A549 (cell line): ENCODE measurements at regions of chr2 and their contacts with region 1.

Region 1: DNA sequence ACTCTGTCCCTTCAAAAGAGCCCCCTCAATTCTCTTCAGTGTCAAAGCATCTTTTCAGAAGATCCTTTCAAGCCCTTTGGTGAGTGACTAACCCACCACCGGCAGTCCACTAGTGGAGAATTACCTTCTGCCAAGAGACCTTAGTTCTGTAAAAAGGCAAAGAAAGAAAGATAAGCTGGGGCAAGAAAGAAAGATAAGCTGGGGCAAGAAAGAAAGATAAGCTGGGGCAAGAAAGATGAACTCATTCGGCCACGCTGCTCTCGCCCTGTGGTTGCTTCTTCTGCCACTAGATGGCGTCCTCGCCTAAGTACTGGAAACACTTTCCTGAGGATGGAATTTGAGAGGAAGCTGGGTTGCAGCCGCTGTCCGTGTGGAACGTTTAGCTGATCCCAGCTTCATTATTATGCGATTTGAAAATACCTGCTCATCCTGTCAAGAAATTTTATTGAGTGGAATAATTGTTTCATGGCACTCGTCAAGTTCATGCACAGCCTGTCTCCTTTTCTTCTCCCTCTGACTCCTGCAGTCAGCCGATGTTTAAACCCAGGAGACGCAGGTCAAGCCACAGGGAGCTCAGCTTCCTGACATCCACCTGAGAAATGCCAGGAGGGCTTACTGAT is 17.3 kb upstream of the ANXA4 start:
- DNase-seq: peak; percentile 69 to 86
- ATAC-seq: peak; percentile 93 to 96
- H3K4me3 ChIP-seq: peak overlapping the region; percentile 31
- H3K27ac ChIP-seq: peak overlapping the region; percentile 69 to 73
- H3K4me1 ChIP-seq: peaks cover 11% of the 10 kb centered on the region
- CTCF ChIP-seq: peak; percentile 99
- EP300 ChIP-seq: no peak
- POLR2A ChIP-seq: no peak
- RAD21 ChIP-seq: peak; percentile 99

Region 2: GRCh38 chr2:69643602-69644505 is 80.8 kb before region 1 on chr2 and contains the start of gene AAK1:
- CTCF ChIA-PET with region 1: interaction called, 10 read pairs
- POLR2A ChIA-PET with region 1: no interaction called
- DNase-seq: peak; percentile 91 to 94
- ATAC-seq: peak; percentile 88 to 91
- H3K4me3 ChIP-seq: peak within 1 kb of the TSS; percentile 88
- H3K27ac ChIP-seq: peak within 1 kb of the TSS; percentile 94 to 98
- H3K4me1 ChIP-seq: peaks cover 38% of the 10 kb centered on the region
- CTCF ChIP-seq: peak; percentile 27; the same call in 1 of the 3 replicates
- EP300 ChIP-seq: no peak
- POLR2A ChIP-seq: peak; percentile 69
- RAD21 ChIP-seq: peak in 1 of 2 experiments; percentile 2; a peak in 2 of 5 replicates
- polyA plus RNA-seq, gene AAK1: 25.7 and 26.9 TPM in 2 replicates

Region 3: DNA sequence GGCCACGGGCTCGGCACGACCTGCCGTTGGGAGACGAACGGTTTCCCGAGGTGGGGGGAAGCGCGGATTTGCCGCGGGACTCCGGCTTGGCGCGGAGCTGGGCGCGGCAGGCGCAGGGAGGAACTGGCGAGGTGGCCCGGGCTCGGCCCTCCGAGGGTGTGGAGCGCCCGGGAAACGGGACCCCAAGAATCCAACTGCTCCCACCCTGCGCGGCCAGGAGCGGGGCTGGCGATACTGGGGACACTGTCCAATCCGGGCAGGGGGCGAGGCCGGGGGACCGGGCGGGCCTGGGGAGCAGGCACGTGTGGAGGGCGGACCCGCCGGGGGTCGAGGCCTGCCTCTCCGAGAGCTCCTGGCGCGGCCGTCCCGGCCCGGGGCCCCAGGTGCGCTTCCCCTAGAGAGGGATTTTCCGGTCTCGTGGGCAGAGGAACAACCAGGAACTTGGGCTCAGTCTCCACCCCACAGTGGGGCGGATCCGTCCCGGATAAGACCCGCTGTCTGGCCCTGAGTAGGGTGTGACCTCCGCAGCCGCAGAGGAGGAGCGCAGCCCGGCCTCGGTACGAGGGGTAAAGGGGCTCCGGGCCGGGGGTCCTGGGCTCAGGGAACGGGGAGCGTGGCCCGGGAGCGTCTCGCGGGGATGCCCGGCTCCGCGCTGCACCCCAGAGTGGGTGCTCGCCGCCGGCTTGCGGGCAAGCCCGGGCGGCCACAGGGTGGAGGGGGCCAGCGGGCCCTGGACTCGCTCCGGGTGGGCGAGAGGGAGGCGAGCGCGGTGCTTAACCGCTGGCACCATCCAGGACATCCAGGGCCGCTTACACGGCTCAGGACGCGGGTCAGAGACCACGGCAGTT is 17.2 kb after region 1 on chr2 and contains the start of gene ANXA4:
- CTCF ChIA-PET with region 1: interaction called, 121 read pairs
- POLR2A ChIA-PET with region 1: interaction called, 19 read pairs
- DNase-seq: peak; percentile 91 to 93
- ATAC-seq: peak; percentile 88 to 94
- H3K4me3 ChIP-seq: peak within 1 kb of the TSS; percentile 76
- H3K27ac ChIP-seq: peak within 1 kb of the TSS; percentile 90 to 99
- H3K4me1 ChIP-seq: peaks cover 58% of the 10 kb centered on the region
- CTCF ChIP-seq: no peak
- EP300 ChIP-seq: peak in 1 of 2 experiments; percentile 17; a peak in 1 of 5 replicates
- POLR2A ChIP-seq: peak; percentile 89
- RAD21 ChIP-seq: peak in 1 of 2 experiments; percentile 19; a peak in 3 of 5 replicates
- polyA plus RNA-seq, gene ANXA4: 341 and 360 TPM in 2 replicates

Region 4: DNA sequence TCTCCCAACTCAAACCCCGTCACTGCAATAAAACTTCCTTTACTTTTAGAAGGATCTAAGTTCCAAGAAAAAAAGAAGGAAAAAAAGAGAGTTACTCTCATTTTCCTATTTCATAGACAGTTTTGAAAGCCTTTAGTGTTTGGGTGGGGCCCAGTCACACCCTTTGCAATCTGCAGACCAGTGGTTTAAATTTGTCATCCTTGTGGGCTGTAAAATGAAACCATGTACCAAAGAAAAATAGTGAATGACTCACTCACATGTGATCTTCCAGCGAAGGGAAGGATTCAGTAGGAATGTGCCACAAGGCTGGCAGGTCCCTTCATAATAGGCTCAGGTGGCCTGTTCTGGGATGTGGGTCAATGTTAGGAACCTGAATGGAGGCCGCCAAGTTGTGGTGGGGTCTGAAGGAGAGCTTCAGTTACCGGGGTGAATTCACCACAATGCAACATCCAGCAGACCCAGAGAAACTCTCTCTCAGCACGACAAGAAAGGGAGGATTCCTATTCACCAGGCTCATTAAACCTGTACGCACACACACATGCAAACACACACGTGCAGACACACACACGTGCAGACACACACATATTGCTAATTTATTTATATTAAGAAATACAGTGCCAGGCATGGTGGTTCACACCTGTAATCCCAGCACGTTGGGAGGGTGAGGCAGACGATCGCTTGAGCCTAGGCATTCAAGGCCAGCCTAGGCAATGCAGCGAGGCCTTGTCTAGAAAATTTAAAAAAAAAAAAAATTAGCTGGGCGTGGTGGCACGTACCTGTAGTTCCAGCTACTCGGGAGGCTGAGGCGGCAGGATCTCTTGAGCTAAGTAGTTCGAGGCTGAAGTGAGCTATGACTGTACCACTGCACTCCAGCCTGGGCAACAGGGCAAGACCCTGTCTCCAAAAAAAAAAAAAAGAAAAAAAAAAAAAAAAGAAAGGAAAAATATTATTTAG is 45.8 kb after region 1 on chr2:
- CTCF ChIA-PET with region 1: interaction called, 28 read pairs
- POLR2A ChIA-PET with region 1: interaction called, 3 read pairs
- DNase-seq: peak; percentile 63 to 77
- ATAC-seq: peak; percentile 71 to 74
- H3K4me3 ChIP-seq: no peak overlapping the region
- H3K27ac ChIP-seq: peak overlapping the region; percentile 90 to 93
- H3K4me1 ChIP-seq: peaks cover 100% of the 10 kb centered on the region
- CTCF ChIP-seq: no peak
- EP300 ChIP-seq: peak in 1 of 2 experiments; percentile 31; a peak in 1 of 5 replicates
- POLR2A ChIP-seq: no peak
- RAD21 ChIP-seq: peak in 1 of 2 experiments; percentile 22; a peak in 1 of 5 replicates

Region 5: DNA sequence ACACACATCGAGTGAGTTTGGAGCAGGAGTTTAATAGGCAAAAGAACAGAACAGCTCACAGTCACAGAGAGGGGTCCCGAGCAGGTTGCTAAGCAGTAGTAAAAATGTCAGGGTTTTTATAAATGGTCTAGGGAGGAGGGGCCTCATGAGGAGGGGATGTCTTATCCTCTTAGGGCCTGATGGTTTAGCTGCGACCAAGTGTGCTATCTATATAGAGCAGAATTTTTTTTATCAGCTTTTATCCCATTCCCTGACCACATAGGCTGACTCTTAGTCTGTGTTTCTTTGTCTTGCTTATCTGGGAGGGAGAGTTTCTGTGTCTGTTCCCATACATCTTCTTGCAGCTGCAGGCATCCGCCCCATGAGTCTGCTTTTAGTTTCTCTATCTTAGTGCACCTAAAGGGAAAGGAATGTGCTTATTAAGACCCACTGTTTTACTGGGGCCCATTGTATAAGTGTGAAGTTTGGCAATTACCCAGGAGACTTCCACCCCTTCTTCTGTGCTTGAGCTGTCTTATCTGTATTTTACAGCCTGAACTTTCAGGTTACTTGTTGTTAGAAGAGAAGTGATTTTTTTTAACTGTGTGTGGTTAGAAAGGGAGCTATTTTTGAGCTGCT is 74.4 kb after region 1 on chr2:
- CTCF ChIA-PET with region 1: interaction called, 41 read pairs
- POLR2A ChIA-PET with region 1: no interaction called
- DNase-seq: no peak
- ATAC-seq: peak in 1 of 2 experiments; percentile 20; a peak in 3 of 6 replicates
- H3K4me3 ChIP-seq: no peak overlapping the region
- H3K27ac ChIP-seq: peak overlapping the region; percentile 44 to 76
- H3K4me1 ChIP-seq: peaks cover 48% of the 10 kb centered on the region
- CTCF ChIP-seq: no peak
- EP300 ChIP-seq: no peak
- POLR2A ChIP-seq: no peak
- RAD21 ChIP-seq: no peak

Region 6: GRCh38 chr2:69888451-69888850 is 163.8 kb after region 1 on chr2:
- CTCF ChIA-PET with region 1: interaction called, 28 read pairs
- POLR2A ChIA-PET with region 1: no interaction called
- DNase-seq: no peak
- ATAC-seq: no peak
- H3K4me3 ChIP-seq: no peak overlapping the region
- H3K27ac ChIP-seq: no peak overlapping the region
- H3K4me1 ChIP-seq: no peaks in the 10 kb centered on the region; the same call in 2 of the 3 replicates
- CTCF ChIP-seq: no peak
- EP300 ChIP-seq: no peak
- POLR2A ChIP-seq: no peak
- RAD21 ChIP-seq: no peak

Region 7: GRCh38 chr2:70070541-70071268 is 346.1 kb after region 1 on chr2:
- CTCF ChIA-PET with region 1: interaction called, 30 read pairs
- POLR2A ChIA-PET with region 1: interaction called, 3 read pairs
- DNase-seq: peak; percentile 92 to 97
- ATAC-seq: peak; percentile 99 to 100
- H3K4me3 ChIP-seq: no peak overlapping the region
- H3K27ac ChIP-seq: peak overlapping the region; percentile 8 to 54; a peak in 4 of 6 replicates
- H3K4me1 ChIP-seq: 0 out of 3 replicates have a peak, but pooled peaks cover 3% of the 10 kb centered on the region
- CTCF ChIP-seq: peak; percentile 79
- EP300 ChIP-seq: no peak
- POLR2A ChIP-seq: no peak
- RAD21 ChIP-seq: peak; percentile 80 to 87